Activated T-helper 1 cell treated with anti-CD3 and anti-CD28 coated beads, Interleukin-12 subunit alpha, Interleukin-12 subunit beta, Interleukin-2, Interleukin-4 antibody, amounts not matched to agents 30 ng/mL and 10 ng/mL and 1 ng/mL, durations not matched to agents 14 hours and 24 hours and 36 hours (primary cell): ENCODE measurements at regions of chr2 and their contacts with region 1.

Region 1: GRCh38 chr2:74440378-74441169 is 1.2 kb downstream of the RTKN start:
- DNase-seq: peak; percentile 37
- H3K4me3 Mint-ChIP-seq: peak overlapping the region; percentile 73
- H3K27ac Mint-ChIP-seq: no peak overlapping the region
- H3K4me1 Mint-ChIP-seq: peaks cover 22% of the 10 kb centered on the region
- H3K27me3 Mint-ChIP-seq: peaks cover 36% of the 10 kb centered on the region

Region 2: DNA sequence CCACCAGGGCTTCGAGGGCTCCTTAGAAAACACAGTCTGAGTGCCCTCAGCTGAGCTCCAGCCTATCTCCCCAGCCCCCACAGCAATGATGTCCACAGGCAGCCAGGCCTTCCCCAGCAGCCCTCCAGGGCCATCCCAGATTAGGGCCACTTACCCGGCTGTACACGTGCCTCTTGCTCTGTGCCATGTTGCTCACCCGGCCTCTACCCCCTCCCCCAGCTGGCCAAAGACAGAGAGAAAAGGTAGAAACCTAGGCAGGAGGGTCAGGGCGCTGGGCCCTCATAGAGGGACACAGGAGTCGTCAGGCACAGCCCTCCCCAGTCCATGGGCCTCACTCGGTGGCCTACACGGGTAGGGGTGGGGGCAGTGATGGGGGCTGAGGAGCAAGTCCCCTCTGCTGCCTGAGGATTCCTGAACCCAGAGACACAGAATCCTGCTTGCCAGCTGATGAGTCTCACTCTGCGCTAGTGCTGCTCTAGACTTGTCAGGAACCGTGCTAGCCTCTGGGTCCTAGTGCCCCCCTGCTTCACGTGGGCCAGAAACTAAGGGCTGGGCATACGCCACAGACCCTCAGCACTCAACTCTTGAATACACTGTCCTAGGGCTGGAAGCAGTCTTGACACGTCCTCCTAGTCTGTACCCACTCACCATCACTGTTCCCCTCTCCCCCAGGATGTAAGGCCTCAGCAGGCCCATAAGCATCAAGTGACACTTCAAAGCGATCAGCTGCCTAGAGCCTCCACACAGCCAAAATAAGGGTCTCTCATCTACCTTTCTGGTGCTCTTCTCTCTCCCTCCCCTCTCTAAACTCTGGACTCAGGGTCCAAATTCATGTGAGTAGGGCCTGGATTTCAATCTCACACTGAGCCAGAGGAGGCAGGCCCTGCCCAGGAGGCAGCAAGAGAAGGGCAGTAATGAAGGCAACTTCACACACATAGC is 60.5 kb before region 1 on chr2 and contains the start of gene DCTN1:
- intact Hi-C with region 1: no loop called
- DNase-seq: no peak
- H3K4me3 Mint-ChIP-seq: peak within 1 kb of the TSS; percentile 2
- H3K27ac Mint-ChIP-seq: no peak within 1 kb of the TSS
- H3K4me1 Mint-ChIP-seq: peaks cover 22% of the 10 kb centered on the region
- H3K27me3 Mint-ChIP-seq: no peaks in the 10 kb centered on the region
- total RNA-seq, gene DCTN1: 83.0 and 84.0 TPM in 2 replicates

Region 3: DNA sequence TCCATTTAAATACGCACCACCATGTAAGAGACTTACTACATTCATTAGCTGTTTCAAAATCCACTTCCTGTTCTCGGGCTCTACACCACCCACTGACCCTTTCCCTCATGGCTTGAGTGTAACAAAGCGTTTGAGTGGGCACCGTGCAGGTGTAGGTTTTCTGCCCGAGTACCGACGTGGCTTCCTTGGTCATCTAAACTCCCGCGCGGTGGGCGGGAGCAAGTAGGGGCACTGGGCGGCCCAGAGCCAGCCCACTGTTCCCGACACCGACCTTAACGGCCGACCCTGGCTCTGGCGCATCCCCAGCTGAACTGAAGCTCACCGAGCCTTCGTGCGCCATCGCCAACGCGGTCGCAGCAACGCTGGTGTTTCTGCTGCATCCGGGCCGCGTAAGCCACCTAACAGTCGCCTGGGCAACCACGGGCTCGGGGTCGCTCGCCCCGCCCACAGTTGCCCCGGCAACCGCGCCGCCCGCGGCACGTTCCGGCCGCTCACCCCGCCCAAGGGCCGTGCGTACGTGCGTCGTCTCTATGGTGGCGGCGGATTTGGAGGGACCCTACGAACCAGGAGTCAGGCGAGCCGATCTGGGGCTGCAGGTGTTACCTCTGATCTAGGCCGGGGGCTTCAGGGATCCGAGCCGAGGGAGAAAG is 19.2 kb before region 1 on chr2 and contains the starts of genes C2orf81 and WDR54:
- intact Hi-C with region 1: loop called (anchors 1 kb)
- DNase-seq: peak; percentile 95
- H3K4me3 Mint-ChIP-seq: peak within 1 kb of the TSS; percentile 98
- H3K27ac Mint-ChIP-seq: peak within 1 kb of the TSS; percentile 99
- H3K4me1 Mint-ChIP-seq: peaks cover 35% of the 10 kb centered on the region
- H3K27me3 Mint-ChIP-seq: no peaks in the 10 kb centered on the region
- total RNA-seq, gene C2orf81: 1.9 and 2.4 TPM in 2 replicates
- total RNA-seq, gene WDR54: 56.4 and 58.6 TPM in 2 replicates

Region 4: DNA sequence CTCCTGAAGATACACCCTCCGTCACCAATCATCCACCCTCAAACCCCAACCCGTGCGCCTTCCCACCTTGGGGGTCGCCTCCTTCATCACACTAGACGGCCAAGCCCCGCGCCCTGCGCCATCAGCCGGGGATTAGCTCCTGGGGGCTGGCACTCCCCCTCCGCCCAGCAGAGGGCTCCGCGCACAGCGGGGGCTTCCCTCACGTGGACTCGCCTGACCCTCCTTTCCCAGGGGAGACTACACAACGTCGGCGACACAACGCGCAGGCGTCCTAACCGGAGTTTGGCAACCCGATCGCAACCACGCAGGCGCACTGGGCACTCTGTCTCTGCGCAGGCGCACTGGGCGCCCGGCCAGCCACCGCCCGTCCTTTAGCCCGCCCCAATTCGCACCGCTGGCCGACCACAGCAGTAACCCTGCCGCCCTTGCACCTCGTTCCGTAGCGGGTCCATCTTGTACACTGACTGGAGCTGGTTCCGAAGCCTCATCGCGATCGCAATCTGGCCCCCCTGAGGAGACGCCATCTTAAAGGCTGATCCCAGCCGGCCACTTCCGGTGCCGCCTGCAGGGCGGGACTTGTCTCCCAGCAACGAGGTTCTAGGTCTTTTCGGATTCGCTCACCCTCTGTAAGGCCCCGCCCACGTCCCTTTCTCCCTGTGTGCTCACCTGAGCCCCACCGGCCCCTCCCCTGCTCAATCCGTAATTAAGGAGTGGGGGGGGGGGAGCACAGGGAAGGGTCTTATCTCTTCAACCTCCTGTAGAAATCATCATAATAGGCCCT is 66.8 kb after region 1 on chr2 and contains the start of gene PCGF1:
- intact Hi-C with region 1: no loop called
- DNase-seq: peak; percentile 96
- H3K4me3 Mint-ChIP-seq: peak within 1 kb of the TSS; percentile 96
- H3K27ac Mint-ChIP-seq: peak within 1 kb of the TSS; percentile 99
- H3K4me1 Mint-ChIP-seq: peaks cover 55% of the 10 kb centered on the region
- H3K27me3 Mint-ChIP-seq: peaks cover 24% of the 10 kb centered on the region
- total RNA-seq, gene PCGF1: 41.9 and 45.0 TPM in 2 replicates